Caco-2 (cell line): ENCODE measurements at regions of chr15 and their contacts with region 1.

Region 1: GRCh38 chr15:78308422-78309032 is 9.1 kb upstream of the SKIC8 start:
- DNase-seq: peak; percentile 74 to 83
- H3K4me3 ChIP-seq: no peak overlapping the region
- H3K4me3 Mint-ChIP-seq: no peak overlapping the region
- H3K27ac Mint-ChIP-seq: no peak overlapping the region
- H3K4me1 ChIP-seq: no peaks in the 10 kb centered on the region
- H3K4me1 Mint-ChIP-seq: no peaks in the 10 kb centered on the region
- H3K27me3 ChIP-seq: no peaks in the 10 kb centered on the region
- H3K27me3 Mint-ChIP-seq: no peaks in the 10 kb centered on the region
- CTCF ChIP-seq: peak; percentile 91 to 92

Region 2: DNA sequence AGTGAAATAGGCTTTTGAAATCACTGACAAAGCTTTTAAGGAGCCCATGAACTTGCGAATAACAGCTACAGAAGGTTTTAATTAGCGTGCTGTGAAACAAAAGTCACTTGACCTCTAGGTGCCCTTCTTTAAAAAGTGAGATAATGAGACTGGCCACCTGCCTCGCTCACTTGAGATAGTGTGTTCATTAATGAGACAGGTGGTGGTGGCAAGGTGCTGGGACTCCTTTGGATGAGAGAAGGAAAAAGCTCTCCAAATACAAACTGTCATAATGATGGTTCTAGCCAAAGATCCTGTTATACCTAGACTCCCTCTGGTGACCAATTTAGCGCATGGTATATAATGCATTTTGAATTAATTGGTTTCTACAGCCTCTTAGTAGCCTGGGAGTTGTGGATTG is 106.8 kb after region 1 on chr15:
- CTCF ChIA-PET with region 1: interaction called, 17 read pairs
- POLR2A ChIA-PET with region 1: no interaction called
- intact Hi-C with region 1: loop called (anchors 2 kb)
- DNase-seq: peak in 1 of 2 experiments; percentile 34
- H3K4me3 ChIP-seq: no peak overlapping the region
- H3K4me3 Mint-ChIP-seq: no peak overlapping the region
- H3K27ac Mint-ChIP-seq: no peak overlapping the region
- H3K4me1 ChIP-seq: peaks cover 7% of the 10 kb centered on the region; the same call in 1 of the 2 replicates
- H3K4me1 Mint-ChIP-seq: peaks cover 7% of the 10 kb centered on the region
- H3K27me3 ChIP-seq: no peaks in the 10 kb centered on the region
- H3K27me3 Mint-ChIP-seq: peaks cover 2% of the 10 kb centered on the region
- CTCF ChIP-seq: peak in 1 of 2 experiments; percentile 37

Region 3: GRCh38 chr15:78422571-78423340 is 114.2 kb after region 1 on chr15:
- CTCF ChIA-PET with region 1: interaction called, 13 read pairs
- POLR2A ChIA-PET with region 1: no interaction called
- intact Hi-C with region 1: loop called (anchors 1 kb)
- DNase-seq: peak; percentile 57 to 67
- H3K4me3 ChIP-seq: no peak overlapping the region
- H3K4me3 Mint-ChIP-seq: no peak overlapping the region
- H3K27ac Mint-ChIP-seq: no peak overlapping the region
- H3K4me1 ChIP-seq: peaks cover 7% of the 10 kb centered on the region; the same call in 1 of the 2 replicates
- H3K4me1 Mint-ChIP-seq: peaks cover 7% of the 10 kb centered on the region
- H3K27me3 ChIP-seq: no peaks in the 10 kb centered on the region
- H3K27me3 Mint-ChIP-seq: peaks cover 4% of the 10 kb centered on the region
- CTCF ChIP-seq: peak; percentile 78 to 85

Region 4: DNA sequence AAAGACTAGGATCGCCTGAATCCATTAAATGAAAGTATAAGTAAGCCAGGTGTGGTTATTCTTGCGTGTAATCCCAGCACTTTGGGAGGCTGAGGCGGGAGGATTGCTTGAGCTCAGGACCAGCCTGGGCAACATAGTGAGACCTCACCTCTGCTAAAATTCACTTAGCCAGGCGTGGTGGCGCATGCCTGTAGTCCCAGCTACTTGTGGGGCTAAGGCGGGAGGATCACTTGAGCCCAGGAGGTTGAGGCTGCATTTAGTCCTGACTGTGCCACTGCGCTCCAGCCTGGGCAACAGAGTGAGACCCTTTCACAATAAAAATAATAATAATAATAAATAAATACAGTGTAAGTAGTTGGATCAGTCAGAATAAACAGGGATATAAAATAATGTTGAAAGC is 173.4 kb after region 1 on chr15:
- CTCF ChIA-PET with region 1: no interaction called
- POLR2A ChIA-PET with region 1: no interaction called
- intact Hi-C with region 1: loop called (anchors 1 kb)
- DNase-seq: no peak
- H3K4me3 ChIP-seq: no peak overlapping the region
- H3K4me3 Mint-ChIP-seq: no peak overlapping the region
- H3K27ac Mint-ChIP-seq: no peak overlapping the region
- H3K4me1 ChIP-seq: no peaks in the 10 kb centered on the region
- H3K4me1 Mint-ChIP-seq: no peaks in the 10 kb centered on the region
- H3K27me3 ChIP-seq: no peaks in the 10 kb centered on the region
- H3K27me3 Mint-ChIP-seq: no peaks in the 10 kb centered on the region
- CTCF ChIP-seq: no peak

Region 5: DNA sequence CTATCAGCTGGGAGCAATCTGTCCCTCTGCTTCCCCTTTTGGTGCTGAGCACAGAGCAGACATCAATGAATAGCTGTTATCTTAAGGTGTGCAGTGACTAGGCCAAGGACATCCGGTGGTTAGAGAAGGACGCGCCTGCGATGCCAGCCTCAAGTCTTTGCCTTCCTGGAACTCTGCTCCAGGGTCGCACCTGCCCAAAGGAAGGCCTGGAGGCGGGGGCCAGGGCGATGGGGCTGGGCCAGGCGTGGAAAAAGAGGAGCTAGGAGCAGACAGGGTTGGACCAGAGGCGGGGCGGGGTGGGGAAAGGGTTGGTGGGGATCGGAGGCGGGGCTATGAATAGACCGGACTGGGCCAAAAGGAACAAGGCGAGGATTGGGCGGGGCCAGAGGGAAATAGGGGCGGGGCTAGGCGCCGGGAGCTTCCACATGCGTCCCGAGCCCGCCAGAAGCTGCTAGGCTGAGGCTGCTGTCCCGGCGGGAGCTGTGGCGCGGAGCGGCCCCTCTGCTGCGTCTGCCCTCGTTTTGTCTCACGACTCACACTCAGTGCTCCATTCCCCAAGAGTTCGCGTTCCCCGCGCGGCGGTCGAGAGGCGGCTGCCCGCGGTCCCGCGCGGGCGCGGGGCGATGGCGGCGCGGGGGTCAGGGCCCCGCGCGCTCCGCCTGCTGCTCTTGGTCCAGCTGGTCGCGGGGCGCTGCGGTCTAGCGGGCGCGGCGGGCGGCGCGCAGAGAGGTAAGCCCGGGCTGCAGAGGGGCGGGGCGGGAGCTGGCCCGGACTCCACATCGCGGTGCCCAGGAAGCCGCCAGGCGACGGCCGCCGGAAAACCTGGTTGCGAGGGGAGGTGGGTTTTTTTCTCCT is 256.8 kb after region 1 on chr15 and contains the start of gene CHRNA5:
- CTCF ChIA-PET with region 1: no interaction called
- POLR2A ChIA-PET with region 1: interaction called, 13 read pairs
- intact Hi-C with region 1: no loop called
- DNase-seq: peak; percentile 85 to 92
- H3K4me3 ChIP-seq: peak within 1 kb of the TSS; percentile 64
- H3K4me3 Mint-ChIP-seq: peak within 1 kb of the TSS; percentile 91
- H3K27ac Mint-ChIP-seq: peak within 1 kb of the TSS; percentile 80
- H3K4me1 ChIP-seq: no peaks in the 10 kb centered on the region
- H3K4me1 Mint-ChIP-seq: peaks cover 13% of the 10 kb centered on the region
- H3K27me3 ChIP-seq: no peaks in the 10 kb centered on the region
- H3K27me3 Mint-ChIP-seq: peaks cover 2% of the 10 kb centered on the region
- CTCF ChIP-seq: no peak
- total RNA-seq, gene CHRNA5: 12.0 and 12.9 TPM in 2 replicates